Activated CD4-positive, alpha-beta T cell treated with anti-CD3 and anti-CD28 coated beads, Interleukin-2, amount 10 ng/mL, durations not matched to agents 24 days and 14 days (primary cell): ENCODE measurements at regions of chrX and their contacts with region 1.

Region 1: DNA sequence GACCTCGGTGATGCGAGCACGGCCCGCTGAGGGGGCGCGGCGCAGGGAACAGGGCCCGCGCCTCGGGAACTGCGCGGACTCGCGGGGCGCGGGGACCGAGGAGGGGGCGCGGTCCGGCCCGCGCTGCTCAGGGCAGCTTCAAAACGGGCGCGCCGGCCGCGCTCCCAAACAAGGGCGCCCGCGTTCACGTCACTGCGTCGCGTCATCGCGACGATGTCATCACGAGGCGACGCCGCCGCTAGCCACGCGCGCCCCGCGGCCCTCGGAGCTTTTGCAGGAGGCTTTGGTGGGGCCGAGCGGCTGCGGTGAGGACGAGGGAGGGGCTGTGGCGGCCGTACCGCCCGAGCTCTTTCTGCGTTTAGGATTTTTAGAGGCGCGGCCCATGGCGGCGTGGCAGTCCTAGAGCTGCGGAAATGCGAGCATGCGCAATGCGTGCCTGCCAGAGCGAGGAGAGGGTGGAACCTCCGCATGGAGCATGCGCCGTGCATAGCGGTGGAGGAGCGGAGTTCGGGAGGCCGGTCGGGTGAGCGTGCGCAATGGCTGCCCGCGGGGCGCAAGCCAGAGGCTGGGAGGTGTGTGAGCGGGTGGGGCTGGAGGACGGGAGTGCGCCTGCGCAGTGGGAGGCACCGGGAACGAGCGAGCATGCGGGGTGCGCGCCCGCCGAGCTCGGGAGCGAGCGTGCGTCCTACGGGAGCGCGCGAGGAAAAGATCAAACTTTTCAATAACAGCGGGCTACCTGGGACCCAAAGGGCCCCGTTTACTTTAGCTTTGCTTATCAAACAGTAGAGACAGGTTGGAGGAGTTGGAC is at the start of gene PPP2R3B:
- DNase-seq: peak; percentile 100
- H3K4me3 Mint-ChIP-seq: peak within 1 kb of the TSS; percentile 83
- H3K27ac Mint-ChIP-seq: peak within 1 kb of the TSS; percentile 95
- H3K4me1 Mint-ChIP-seq: peaks cover 7% of the 10 kb centered on the region
- H3K27me3 Mint-ChIP-seq: peaks cover 4% of the 10 kb centered on the region
- total RNA-seq, gene PPP2R3B: 47.5 and 47.8 TPM in 2 replicates

Region 2: GRCh38 chrX:283115-283845 is 103.7 kb before region 1 on chrX:
- intact Hi-C with region 1: loop called (anchors 2 kb)
- DNase-seq: peak; percentile 97
- H3K4me3 Mint-ChIP-seq: peak overlapping the region; percentile 97
- H3K27ac Mint-ChIP-seq: peak overlapping the region; percentile 99
- H3K4me1 Mint-ChIP-seq: peaks cover 23% of the 10 kb centered on the region
- H3K27me3 Mint-ChIP-seq: no peaks in the 10 kb centered on the region

Region 3: GRCh38 chrX:318739-319578 is 68.0 kb before region 1 on chrX and contains the start of gene GTPBP6:
- intact Hi-C with region 1: loop called (anchors 1 kb)
- DNase-seq: peak; percentile 100
- H3K4me3 Mint-ChIP-seq: peak within 1 kb of the TSS; percentile 96
- H3K27ac Mint-ChIP-seq: peak within 1 kb of the TSS; percentile 97
- H3K4me1 Mint-ChIP-seq: peaks cover 23% of the 10 kb centered on the region
- H3K27me3 Mint-ChIP-seq: peaks cover 4% of the 10 kb centered on the region
- total RNA-seq, gene GTPBP6: 66.3 and 70.5 TPM in 2 replicates

Region 4: GRCh38 chrX:357693-358471 is 29.1 kb before region 1 on chrX:
- intact Hi-C with region 1: loop called (anchors 1 kb)
- DNase-seq: peak; percentile 82
- H3K4me3 Mint-ChIP-seq: peak overlapping the region; percentile 60
- H3K27ac Mint-ChIP-seq: peak overlapping the region; percentile 90
- H3K4me1 Mint-ChIP-seq: peaks cover 18% of the 10 kb centered on the region
- H3K27me3 Mint-ChIP-seq: no peaks in the 10 kb centered on the region

Region 5: GRCh38 chrX:373637-374471 is 13.1 kb before region 1 on chrX:
- intact Hi-C with region 1: loop called (anchors 1 kb)
- DNase-seq: peak; percentile 80
- H3K4me3 Mint-ChIP-seq: peak overlapping the region; percentile 85
- H3K27ac Mint-ChIP-seq: peak overlapping the region; percentile 78
- H3K4me1 Mint-ChIP-seq: peaks cover 19% of the 10 kb centered on the region
- H3K27me3 Mint-ChIP-seq: peaks cover 37% of the 10 kb centered on the region

Region 6: DNA sequence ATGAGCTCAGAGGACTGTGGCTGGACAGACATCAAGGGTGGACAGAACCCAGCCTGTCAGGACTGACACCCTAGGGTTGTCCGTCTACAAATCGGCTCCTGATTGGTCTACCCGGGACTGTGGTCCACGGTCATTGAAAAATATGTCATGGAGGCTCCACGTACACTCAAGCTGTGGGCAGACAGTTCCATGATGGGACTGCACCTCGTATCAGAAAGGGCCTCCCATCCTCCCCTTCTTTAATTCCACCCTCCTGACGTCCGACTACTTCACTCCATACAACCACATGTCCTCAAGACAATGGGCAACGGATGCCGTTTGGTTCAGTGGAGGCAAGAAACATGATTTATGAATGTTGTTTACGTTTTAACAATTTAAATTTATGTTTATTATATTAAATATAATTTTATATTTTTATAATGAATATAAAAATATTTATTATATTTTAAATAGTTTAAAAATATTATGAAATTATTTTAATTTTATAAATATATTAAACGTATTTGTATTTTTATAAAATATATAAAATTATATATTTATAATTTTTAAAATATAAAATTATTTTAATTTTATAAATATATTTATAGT is 185.7 kb after region 1 on chrX:
- intact Hi-C with region 1: loop called (anchors 5 kb)
- DNase-seq: no peak
- H3K4me3 Mint-ChIP-seq: no peak overlapping the region
- H3K27ac Mint-ChIP-seq: no peak overlapping the region
- H3K4me1 Mint-ChIP-seq: no peaks in the 10 kb centered on the region
- H3K27me3 Mint-ChIP-seq: no peaks in the 10 kb centered on the region

Region 7: DNA sequence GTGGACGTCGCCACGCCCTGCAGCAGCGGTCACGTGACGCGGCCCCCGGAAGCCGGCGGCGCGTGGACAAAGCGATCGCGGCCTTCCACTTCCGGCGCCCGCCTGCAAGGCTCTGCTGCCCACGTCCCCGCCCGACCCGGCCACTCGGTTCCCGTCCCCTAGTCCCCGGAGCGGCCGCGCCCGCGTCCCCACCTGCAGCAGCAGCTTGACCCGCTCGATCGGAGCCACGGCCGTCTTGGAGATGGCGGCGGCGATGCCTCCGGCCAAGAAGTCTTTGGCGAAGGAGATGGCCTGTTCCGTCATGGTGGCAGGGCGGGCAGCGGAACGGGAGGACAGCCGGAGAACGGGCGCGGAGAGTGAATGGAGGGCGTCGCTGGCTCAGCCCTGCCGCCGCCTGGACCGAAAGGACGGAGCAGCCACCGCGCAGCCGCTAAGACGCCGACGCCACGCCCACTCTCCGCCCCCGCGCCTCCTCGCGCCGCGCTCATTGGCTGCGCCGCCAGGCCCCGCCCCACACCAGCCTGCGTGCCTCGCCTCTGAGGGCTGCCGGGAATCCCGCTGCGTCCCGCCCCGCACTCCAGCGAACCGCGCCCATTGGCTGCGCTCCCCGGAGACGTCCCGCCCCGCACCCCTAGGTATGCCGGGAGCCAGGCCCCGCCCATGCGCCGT is 1004.9 kb after region 1 on chrX and contains the start of gene SLC25A6:
- intact Hi-C with region 1: loop called (anchors 2 kb)
- DNase-seq: peak; percentile 100
- H3K4me3 Mint-ChIP-seq: peak within 1 kb of the TSS; percentile 97
- H3K27ac Mint-ChIP-seq: peak within 1 kb of the TSS; percentile 98
- H3K4me1 Mint-ChIP-seq: peaks cover 36% of the 10 kb centered on the region
- H3K27me3 Mint-ChIP-seq: no peaks in the 10 kb centered on the region
- total RNA-seq, gene SLC25A6: 302 and 306 TPM in 2 replicates